Activated naive CD4-positive, alpha-beta T cell treated with anti-CD3 and anti-CD28 coated beads for 36 hours (primary cell): ENCODE measurements at regions of chr6 and their contacts with region 1.

Region 1: DNA sequence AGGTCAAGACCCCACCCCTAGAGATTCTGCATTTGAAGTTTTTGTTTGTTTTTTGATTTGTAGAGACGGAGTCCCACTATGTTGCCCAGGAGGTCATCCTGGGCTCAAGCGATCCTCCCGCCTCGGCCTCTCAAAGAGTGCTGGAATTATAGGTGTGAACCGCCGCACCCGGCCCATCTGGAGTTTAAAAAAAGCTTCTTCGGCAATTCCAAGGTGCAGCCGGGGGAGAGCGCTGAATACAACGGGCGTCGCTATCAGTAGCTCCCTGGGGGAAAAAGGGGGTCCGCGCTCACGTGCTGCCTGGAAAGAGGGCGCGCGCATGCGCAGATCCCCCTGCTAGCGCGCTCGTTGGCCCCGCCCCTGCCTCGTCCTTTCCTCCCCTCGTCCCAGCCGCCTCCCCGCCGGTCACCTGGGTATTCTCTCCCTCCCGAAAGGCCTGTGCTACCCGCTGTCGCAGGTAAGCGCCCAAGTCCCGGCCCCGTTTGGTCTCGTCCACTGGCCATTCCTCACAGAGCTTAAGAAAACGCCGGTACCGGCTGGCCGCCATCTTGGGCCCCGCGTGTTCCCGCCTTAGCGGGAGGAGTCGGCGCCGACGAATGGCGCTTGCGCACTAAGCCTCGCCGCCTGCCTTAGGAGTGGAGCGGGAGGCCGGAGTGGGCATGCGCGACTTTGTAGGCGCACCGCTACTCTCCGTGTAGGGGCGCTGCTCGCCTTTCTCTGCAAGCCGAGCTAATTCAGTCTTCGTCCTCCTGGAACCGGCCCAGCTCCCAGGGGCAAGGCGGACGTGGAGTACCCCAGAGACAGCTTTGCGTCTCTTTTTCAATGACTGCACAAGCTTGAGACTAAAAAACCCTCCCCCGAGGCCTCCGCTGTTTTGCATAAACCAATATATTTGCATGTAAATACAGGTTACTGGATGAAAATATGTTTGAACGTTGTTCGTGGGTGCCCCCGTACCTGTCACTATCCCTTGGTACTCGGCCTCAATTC is at the start of gene UQCC2:
- DNase-seq: peak; percentile 98
- H3K4me3 Mint-ChIP-seq: peak within 1 kb of the TSS; percentile 95
- H3K27ac Mint-ChIP-seq: peak within 1 kb of the TSS; percentile 96
- H3K4me1 Mint-ChIP-seq: peaks cover 28% of the 10 kb centered on the region
- H3K27me3 Mint-ChIP-seq: no peaks in the 10 kb centered on the region
- total RNA-seq, gene UQCC2: 199 to 205 TPM

Region 2: DNA sequence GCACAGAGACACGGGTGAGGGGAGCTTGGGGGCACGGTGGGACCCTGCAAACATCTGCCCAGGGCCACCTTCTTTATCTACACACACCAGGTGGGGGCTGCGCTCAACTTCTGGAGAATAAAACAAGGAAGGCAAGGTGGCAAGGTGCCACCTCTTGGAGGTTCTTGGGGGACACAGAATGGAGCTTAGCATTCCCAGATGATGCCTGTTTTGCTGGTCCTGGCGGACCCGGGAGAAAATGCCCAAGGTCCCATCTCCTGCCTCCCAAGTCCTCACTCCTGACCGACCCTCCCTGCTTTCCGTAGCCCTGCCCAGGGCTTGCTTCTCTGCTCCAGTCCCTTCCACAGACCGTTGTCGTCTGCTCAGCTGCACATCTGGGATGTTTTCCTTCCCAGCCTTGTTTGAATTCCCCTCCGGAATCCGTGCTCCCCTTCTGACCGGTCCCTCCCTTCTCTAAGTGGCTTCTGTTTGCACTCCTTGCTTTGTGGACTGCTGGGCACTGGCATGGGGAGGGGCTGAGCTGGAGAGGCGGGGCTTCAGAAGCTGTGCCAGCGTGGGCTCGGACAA is 77.2 kb before region 1 on chr6:
- CTCF ChIA-PET with region 1: no interaction called
- intact Hi-C with region 1: no loop called
- DNase-seq: no peak
- H3K4me3 Mint-ChIP-seq: peak overlapping the region; percentile 74
- H3K27ac Mint-ChIP-seq: peak overlapping the region; percentile 27
- H3K4me1 Mint-ChIP-seq: peaks cover 60% of the 10 kb centered on the region
- H3K27me3 Mint-ChIP-seq: no peaks in the 10 kb centered on the region

Region 3: DNA sequence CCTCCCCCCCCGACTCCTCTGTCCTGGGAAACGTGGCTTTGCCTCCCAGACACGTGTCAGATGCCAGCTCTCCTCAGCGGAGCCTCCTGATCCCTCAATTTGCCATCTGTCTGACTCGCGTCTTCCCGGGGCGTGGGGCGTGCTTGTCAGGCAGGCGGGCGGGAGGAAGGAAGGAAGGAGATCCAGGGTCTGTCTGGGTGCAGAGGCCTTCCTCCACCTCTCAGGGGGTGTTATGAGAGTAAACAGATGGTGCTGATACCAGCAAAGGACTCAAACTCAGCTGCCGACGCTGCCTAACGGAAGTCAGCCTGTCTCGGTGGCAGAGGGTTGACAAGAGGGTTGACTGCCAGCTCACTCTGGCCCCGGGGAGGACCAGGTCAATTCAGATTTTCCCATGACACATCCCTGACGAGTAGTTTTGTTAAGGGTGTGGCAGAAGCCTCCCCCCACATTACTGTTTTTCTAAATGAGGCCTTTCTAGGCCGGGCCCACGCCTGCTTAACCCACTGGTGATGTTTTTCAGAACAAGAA is 17.0 kb before region 1 on chr6:
- CTCF ChIA-PET with region 1: interaction called, 4 read pairs
- intact Hi-C with region 1: loop called (anchors 1 kb)
- DNase-seq: peak; percentile 86
- H3K4me3 Mint-ChIP-seq: peak overlapping the region; percentile 4
- H3K27ac Mint-ChIP-seq: peak overlapping the region; percentile 86
- H3K4me1 Mint-ChIP-seq: peaks cover 80% of the 10 kb centered on the region
- H3K27me3 Mint-ChIP-seq: no peaks in the 10 kb centered on the region

Region 4: DNA sequence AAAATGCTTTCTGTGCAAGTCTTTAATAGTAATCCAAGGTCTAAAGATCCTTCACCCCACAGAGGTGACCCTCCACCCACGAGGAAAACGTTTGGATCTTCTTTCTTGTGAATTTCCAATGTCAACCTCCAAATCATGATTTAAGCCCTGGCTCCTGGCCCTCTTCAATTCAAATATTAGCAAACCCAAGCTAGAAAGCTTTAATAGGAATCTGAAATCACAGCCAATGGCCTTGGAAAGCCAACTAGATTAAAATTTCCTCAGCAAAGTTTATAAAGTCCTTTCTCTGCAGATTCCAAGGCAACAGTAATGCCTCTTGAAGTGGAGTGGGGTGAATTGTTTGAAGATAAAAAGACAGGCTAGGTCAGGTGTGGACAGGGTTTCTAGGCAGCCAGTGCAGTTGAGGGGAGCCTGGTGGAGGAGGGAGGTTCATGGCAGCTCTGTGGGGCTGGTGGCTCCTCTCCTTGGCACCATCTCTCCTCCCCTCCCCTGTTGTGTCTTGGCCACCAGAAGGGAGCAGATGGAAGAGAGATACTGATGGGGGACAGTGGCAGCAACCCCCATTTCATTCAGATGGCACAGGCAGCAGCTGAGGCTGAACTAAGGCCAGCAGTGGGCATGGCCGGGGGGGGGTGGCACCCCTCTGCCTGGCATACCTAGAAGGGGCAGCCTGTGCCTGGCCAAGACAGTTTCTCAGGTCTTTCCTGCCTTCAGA is 12.1 kb after region 1 on chr6:
- CTCF ChIA-PET with region 1: interaction called, 24 read pairs
- intact Hi-C with region 1: no loop called
- DNase-seq: no peak
- H3K4me3 Mint-ChIP-seq: no peak overlapping the region
- H3K27ac Mint-ChIP-seq: no peak overlapping the region
- H3K4me1 Mint-ChIP-seq: peaks cover 23% of the 10 kb centered on the region
- H3K27me3 Mint-ChIP-seq: no peaks in the 10 kb centered on the region

Region 5: DNA sequence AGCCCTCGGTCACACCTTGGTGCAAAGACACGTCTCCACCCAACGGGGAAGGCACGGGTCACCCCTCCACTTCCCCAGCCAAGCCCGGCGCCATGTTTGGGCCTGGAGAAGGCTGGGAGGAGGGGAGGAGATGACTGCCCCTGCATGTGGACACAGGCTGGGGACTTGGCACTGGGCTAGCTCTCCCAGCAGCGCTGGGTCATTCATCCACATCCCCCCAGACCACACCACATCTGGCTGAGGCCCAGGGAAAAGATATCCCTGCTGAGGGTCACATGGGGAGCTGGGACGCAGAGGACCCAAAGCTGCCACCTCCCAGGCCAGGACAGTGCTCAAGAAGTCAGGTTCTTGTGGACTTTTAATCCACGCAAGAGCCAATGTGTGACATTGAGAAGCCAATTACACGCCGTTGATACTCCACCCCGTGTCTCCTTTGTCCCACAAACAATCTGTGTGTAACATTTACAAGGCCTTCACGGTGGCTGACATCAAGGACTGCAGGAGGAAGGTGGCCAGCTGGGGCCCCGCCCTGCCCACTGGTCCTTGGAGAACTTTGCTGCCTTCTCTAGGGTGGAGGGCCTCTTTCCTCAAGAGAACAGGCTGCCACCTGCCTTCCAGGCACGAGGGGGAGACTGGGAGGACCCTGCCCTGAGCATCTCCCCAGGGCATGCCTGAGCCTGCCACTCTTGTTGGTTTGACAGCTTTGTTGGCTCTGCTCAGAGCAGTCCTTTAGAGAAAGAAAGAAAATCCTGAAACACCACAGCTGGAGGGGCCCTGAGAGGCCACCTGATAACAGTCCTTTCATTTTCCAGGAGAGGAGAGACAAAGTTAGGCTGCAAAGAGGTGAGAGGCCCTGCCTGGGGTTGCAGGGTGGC is 40.6 kb after region 1 on chr6:
- CTCF ChIA-PET with region 1: no interaction called
- intact Hi-C with region 1: no loop called
- DNase-seq: no peak
- H3K4me3 Mint-ChIP-seq: no peak overlapping the region
- H3K27ac Mint-ChIP-seq: no peak overlapping the region
- H3K4me1 Mint-ChIP-seq: no peaks in the 10 kb centered on the region
- H3K27me3 Mint-ChIP-seq: no peaks in the 10 kb centered on the region

Region 6: GRCh38 chr6:33761922-33762629 is 50.6 kb after region 1 on chr6:
- CTCF ChIA-PET with region 1: interaction called, 8 read pairs
- intact Hi-C with region 1: loop called (anchors 1 kb)
- DNase-seq: peak; percentile 73
- H3K4me3 Mint-ChIP-seq: no peak overlapping the region
- H3K27ac Mint-ChIP-seq: no peak overlapping the region
- H3K4me1 Mint-ChIP-seq: no peaks in the 10 kb centered on the region
- H3K27me3 Mint-ChIP-seq: no peaks in the 10 kb centered on the region

Region 7: DNA sequence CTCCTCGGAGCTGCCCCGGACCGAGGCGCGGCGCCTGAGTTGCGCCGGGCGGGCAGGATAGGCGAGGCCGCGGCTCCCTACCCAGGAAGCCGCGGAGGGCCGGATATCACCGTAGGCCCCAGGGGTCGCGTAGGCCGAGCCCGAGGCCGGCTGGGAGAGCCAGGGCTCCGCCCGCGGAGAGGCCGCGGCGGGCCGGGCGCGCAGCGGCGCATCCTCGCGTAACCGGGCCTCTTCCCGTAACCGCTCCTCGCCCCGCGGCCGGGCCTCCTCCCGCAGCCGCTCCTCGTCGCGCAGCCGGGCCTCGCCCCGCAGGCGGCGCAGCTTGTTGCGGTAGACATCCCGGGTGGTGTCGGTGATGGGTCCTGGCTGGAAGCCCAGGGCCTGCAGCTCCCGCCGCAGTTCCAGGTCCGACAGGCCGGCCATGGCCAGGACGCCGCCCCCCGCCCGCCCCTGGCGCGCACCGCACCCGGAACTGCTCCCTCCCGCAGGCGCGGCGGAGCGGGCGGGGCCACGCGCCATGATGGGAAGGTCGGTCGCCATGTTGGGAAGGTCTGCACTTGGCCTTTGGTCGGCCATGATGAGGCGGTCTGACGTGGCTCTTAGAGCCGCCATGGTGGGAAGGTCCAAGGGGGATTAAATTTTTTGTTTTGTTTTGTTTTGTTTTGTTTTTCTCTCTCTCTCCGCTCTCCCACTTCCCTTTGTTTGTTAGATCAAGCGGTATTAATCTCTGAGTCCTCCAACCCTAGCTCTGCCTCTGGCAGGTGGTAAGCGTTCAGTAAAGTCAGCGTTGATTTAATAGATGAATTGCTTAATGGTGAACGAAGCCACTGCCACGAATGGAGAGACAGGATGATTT is 77.5 kb after region 1 on chr6 and contains the start of gene LEMD2:
- CTCF ChIA-PET with region 1: interaction called, 5 read pairs
- intact Hi-C with region 1: loop called (anchors 2 kb)
- DNase-seq: peak; percentile 95
- H3K4me3 Mint-ChIP-seq: peak within 1 kb of the TSS; percentile 88
- H3K27ac Mint-ChIP-seq: peak within 1 kb of the TSS; percentile 92
- H3K4me1 Mint-ChIP-seq: peaks cover 41% of the 10 kb centered on the region
- H3K27me3 Mint-ChIP-seq: no peaks in the 10 kb centered on the region
- total RNA-seq, gene LEMD2: 64.0 to 66.3 TPM

Region 8: GRCh38 chr6:33875141-33875581 is 163.7 kb after region 1 on chr6:
- CTCF ChIA-PET with region 1: no interaction called
- intact Hi-C with region 1: no loop called
- DNase-seq: no peak
- H3K4me3 Mint-ChIP-seq: no peak overlapping the region
- H3K27ac Mint-ChIP-seq: no peak overlapping the region
- H3K4me1 Mint-ChIP-seq: peaks cover 2% of the 10 kb centered on the region
- H3K27me3 Mint-ChIP-seq: no peaks in the 10 kb centered on the region

Region 9: GRCh38 chr6:34358389-34358905 is 647.0 kb after region 1 on chr6:
- CTCF ChIA-PET with region 1: no interaction called
- intact Hi-C with region 1: no loop called
- DNase-seq: no peak
- H3K4me3 Mint-ChIP-seq: no peak overlapping the region
- H3K27ac Mint-ChIP-seq: no peak overlapping the region
- H3K4me1 Mint-ChIP-seq: peaks cover 28% of the 10 kb centered on the region
- H3K27me3 Mint-ChIP-seq: no peaks in the 10 kb centered on the region